CD8-positive, alpha-beta T cell (primary cell): ENCODE measurements at regions of chr20 and their contacts with region 1.

Region 1: DNA sequence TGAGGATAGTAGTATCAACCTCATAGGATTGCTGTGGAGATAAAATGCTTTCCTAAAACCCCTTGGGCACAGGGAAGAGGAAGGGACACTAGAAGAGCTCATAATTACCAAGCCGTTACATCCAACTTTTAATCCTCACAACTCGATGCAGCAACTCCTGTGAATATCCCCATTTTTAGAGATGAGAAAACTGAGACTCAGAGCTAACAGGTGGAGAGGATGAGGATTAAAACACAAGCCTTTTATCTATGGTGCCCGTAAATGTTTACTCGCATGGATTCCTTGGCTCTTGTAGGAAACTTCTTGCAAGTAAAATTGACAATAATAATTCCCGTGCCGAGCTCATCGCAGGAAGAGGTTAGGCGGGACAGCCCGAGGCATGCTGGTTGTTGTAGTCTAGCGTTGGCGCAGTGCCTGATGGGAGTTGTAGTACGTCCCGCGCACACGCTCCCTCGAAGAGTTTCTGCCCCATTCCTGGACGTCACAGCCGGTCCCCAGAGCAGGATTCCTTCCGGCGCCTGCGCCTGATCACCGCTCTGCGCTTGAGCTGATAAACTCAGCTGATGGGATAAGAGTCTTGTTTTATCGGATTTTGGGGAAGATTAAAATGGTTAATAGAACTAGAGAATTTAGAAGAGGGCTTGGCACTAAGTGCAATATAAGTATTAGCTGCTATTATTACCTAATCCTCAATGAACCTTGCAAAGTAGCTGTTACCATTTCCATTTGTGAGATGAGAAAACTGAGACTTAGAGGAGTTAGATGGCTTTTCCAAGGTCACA is 2.8 kb upstream of the UBE2V1 start:
- DNase-seq: peak; percentile 75 to 95 (median 90)
- ATAC-seq: peak; percentile 78
- H3K4me3 ChIP-seq: peak overlapping the region; percentile 47 to 55
- H3K4me3 Mint-ChIP-seq: peak overlapping the region; percentile 87
- H3K27ac ChIP-seq: peak overlapping the region; percentile 22 to 25
- H3K27ac Mint-ChIP-seq: peak overlapping the region; percentile 84
- H3K4me1 ChIP-seq: peaks cover 39% of the 10 kb centered on the region
- H3K4me1 Mint-ChIP-seq: peaks cover 53% of the 10 kb centered on the region
- H3K27me3 ChIP-seq: no peaks in the 10 kb centered on the region
- H3K27me3 Mint-ChIP-seq: no peaks in the 10 kb centered on the region
- CTCF ChIP-seq: no peak

Region 2: DNA sequence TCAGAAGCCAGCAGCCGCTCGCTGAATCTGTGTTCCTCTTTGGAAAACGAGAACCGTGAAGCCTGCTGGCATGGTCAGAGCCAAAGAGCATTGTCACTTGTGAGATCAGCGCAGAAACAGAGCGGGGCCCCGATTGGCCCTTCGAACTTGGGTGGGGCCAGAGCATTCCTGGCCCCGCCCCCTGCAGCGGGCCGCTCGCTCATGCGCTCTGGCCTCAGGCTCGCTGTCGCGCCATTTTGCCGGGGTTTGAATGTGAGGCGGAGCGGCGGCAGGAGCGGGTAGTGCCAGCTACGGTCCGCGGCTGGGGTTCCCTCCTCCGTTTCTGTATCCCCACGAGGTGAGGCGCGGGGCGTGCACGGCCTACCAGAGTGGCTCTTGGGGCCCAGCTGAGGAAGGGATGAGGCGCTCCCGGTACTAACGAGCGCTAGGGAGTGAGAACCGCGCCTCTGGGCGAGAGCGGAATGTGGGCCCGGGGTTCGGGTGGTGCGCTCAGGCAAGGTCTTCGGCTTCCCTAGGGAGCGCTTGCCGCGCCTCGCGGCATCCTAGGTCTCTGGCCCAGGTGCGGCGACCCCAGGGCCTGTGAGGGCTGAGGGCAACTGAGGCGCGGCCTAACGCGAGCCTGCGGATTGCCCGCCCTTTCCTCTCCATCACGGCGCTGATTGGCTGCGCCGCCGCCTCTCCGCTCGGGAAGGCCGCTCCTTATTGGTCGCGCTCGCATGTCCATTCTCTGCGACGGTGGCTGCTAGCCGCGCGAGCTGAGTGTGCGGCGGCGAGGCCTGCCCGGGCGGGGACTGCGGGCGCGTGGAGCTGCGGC is 1069.5 kb before region 1 on chr20 and contains the start of gene CSE1L:
- CTCF ChIA-PET with region 1: no interaction called
- POLR2A ChIA-PET with region 1: no interaction called
- intact Hi-C with region 1: loop called in 1 of 2 experiments (anchors 10 kb)
- DNase-seq: peak; percentile 86 to 98 (median 95)
- ATAC-seq: peak; percentile 89
- H3K4me3 ChIP-seq: peak within 1 kb of the TSS; percentile 81 to 96
- H3K4me3 Mint-ChIP-seq: peak within 1 kb of the TSS; percentile 98
- H3K27ac ChIP-seq: peak within 1 kb of the TSS; percentile 85 to 90
- H3K27ac Mint-ChIP-seq: peak within 1 kb of the TSS; percentile 97
- H3K4me1 ChIP-seq: peaks cover 27% of the 10 kb centered on the region
- H3K4me1 Mint-ChIP-seq: peaks cover 34% of the 10 kb centered on the region
- H3K27me3 ChIP-seq: no peaks in the 10 kb centered on the region
- H3K27me3 Mint-ChIP-seq: no peaks in the 10 kb centered on the region
- CTCF ChIP-seq: no peak
- total RNA-seq, gene CSE1L: 31.8 to 33.4 TPM

Region 3: DNA sequence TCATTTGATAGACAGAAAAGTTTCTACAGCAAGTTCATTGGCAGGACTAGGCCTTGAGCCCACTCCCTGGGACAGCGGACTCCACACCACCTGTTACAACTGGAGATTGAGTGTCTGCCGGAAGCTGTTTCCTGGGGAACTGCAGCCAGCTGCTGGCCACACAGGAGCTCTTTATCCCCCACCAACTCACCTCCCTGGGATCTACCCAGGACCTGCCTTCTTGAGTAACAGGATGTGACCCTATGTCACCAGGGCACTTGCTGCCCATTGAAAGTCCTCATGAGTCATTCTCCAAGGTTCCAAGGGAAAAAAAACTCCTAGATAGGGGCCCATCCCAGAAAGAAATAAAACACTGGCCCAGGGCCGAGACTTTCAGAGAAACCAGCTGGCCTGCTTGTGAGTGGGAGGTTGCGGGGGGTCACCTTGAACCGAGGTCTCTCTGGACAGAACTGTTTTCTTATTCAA is 340.5 kb before region 1 on chr20:
- CTCF ChIA-PET with region 1: no interaction called
- POLR2A ChIA-PET with region 1: no interaction called
- intact Hi-C with region 1: no loop called
- DNase-seq: no peak
- ATAC-seq: no peak
- H3K4me3 ChIP-seq: no peak overlapping the region
- H3K4me3 Mint-ChIP-seq: no peak overlapping the region
- H3K27ac ChIP-seq: no peak overlapping the region
- H3K27ac Mint-ChIP-seq: no peak overlapping the region
- H3K4me1 ChIP-seq: no peaks in the 10 kb centered on the region
- H3K4me1 Mint-ChIP-seq: peaks cover 6% of the 10 kb centered on the region
- H3K27me3 ChIP-seq: no peaks in the 10 kb centered on the region
- H3K27me3 Mint-ChIP-seq: peaks cover 11% of the 10 kb centered on the region
- CTCF ChIP-seq: no peak

Region 4: GRCh38 chr20:49982346-49983122 is 133.2 kb before region 1 on chr20 and contains the start of gene SNAI1:
- CTCF ChIA-PET with region 1: interaction called, 9 read pairs
- POLR2A ChIA-PET with region 1: interaction called, 4 read pairs
- intact Hi-C with region 1: loop called in 1 of 2 experiments (anchors 1 kb)
- DNase-seq: peak; percentile 65 to 94 (median 82)
- ATAC-seq: peak; percentile 92
- H3K4me3 ChIP-seq: peak within 1 kb of the TSS; percentile 35 to 51
- H3K4me3 Mint-ChIP-seq: peak within 1 kb of the TSS; percentile 72
- H3K27ac ChIP-seq: peak within 1 kb of the TSS in 1 of 2 experiments; percentile 51
- H3K27ac Mint-ChIP-seq: peak within 1 kb of the TSS; percentile 79
- H3K4me1 ChIP-seq: peaks cover 24% of the 10 kb centered on the region
- H3K4me1 Mint-ChIP-seq: peaks cover 28% of the 10 kb centered on the region
- H3K27me3 ChIP-seq: no peaks in the 10 kb centered on the region
- H3K27me3 Mint-ChIP-seq: no peaks in the 10 kb centered on the region
- CTCF ChIP-seq: peak; percentile 55
- total RNA-seq, gene SNAI1: 3.0 to 3.1 TPM

Region 5: DNA sequence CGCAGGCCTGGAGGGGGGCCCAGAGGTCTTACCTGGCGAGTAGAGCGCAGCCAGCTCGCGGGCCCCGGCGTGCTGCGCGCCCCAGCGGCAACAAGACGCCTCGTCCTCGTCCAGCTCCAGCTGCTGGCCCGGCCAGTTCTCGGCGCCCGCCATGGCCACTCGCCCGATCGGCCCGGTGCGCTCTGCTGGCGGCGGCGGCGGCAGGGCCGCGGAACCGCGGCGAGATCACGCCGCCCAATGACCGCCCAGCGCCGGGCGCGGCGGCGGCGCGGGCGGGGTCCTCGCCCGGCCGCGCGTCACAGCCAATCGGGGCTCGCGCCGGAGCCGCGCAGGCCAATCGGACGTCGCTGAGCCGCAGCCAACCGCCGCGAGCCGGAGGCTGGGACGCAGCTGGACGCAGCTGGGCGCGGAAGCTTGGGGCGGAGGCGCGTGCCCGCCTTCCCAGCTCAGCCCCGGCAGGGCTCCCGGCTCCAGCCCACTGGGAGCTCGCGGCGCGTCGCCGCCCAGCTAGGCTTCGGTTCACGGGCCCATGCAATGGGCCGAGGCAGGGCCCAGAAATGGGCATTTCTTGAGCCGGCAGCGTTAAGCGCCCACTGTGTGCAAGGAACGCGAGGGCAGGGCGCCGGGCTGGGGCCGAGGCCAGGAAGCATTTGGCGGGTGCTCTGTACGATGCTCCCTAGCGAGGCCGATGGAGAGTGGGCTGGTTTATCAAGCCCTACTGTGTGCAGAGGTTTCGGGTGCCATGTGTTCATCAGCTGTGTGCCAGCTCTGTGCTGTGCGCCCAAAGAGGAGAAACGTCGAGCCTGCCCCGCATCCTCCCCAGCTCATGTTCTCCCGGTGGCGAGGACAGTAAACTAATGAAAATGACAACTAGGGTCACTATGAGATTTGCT is 37.9 kb after region 1 on chr20 and contains the start of gene PEDS1:
- CTCF ChIA-PET with region 1: interaction called, 59 read pairs
- POLR2A ChIA-PET with region 1: interaction called, 20 read pairs
- intact Hi-C with region 1: loop called (anchors 1 to 5 kb)
- DNase-seq: peak; percentile 55 to 92 (median 80)
- ATAC-seq: peak; percentile 93
- H3K4me3 ChIP-seq: peak within 1 kb of the TSS; percentile 89 to 92
- H3K4me3 Mint-ChIP-seq: peak within 1 kb of the TSS; percentile 90
- H3K27ac ChIP-seq: peak within 1 kb of the TSS; percentile 77 to 78
- H3K27ac Mint-ChIP-seq: peak within 1 kb of the TSS; percentile 91
- H3K4me1 ChIP-seq: peaks cover 36% of the 10 kb centered on the region
- H3K4me1 Mint-ChIP-seq: peaks cover 43% of the 10 kb centered on the region
- H3K27me3 ChIP-seq: no peaks in the 10 kb centered on the region
- H3K27me3 Mint-ChIP-seq: no peaks in the 10 kb centered on the region
- CTCF ChIP-seq: no peak
- total RNA-seq, gene PEDS1: 19.0 to 20.8 TPM

Region 6: DNA sequence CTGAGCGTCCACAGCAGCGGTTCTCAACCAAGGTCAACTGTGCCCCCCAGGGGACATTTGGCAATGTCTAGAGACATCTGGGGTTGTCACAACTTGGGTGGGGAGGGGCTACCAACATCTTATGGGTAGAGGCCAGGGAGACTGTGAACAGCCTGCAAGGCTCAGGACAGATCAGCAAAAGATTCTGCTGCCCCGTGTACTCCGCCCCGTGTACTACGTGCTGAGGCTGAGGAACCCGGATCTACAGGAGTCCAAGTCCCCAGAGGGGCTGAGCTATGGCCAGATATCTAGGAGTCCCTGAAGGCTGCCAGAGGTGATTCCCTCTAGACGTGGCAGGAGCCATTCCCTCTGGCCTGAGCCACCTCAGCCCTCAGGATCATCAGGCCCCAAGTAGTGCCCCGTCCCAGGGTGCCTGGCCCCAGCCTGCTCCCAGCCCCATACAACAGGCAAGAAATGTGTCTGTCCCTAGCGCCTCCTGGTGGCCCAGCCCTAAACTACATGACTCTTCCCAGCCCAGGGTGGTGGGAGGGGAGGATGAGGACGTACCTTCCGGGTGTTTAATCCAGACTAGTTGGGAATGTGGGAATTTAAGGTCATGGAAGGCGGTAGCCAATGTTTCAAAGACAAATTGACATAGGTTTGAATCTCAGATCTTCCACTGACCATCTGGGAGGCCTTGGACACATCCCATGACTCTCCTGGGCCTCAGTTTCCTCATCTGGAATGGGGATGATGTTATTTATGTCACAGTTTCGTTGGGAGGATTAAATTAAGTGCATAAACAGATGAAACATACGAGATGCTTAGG is 344.9 kb after region 1 on chr20:
- CTCF ChIA-PET with region 1: interaction called, 17 read pairs
- POLR2A ChIA-PET with region 1: no interaction called
- intact Hi-C with region 1: loop called (anchors 5 kb)
- DNase-seq: peak; percentile 65 to 85 (median 81)
- ATAC-seq: peak; percentile 91
- H3K4me3 ChIP-seq: no peak overlapping the region
- H3K4me3 Mint-ChIP-seq: no peak overlapping the region
- H3K27ac ChIP-seq: no peak overlapping the region
- H3K27ac Mint-ChIP-seq: no peak overlapping the region
- H3K4me1 ChIP-seq: peaks cover 3% of the 10 kb centered on the region
- H3K4me1 Mint-ChIP-seq: peaks cover 4% of the 10 kb centered on the region
- H3K27me3 ChIP-seq: peaks cover 0 to 5% of the 10 kb centered on the region in 2 experiments
- H3K27me3 Mint-ChIP-seq: peaks cover 12% of the 10 kb centered on the region
- CTCF ChIP-seq: peak; percentile 72